ENCODE measurements at regions of chr5 and their contacts with region 1.

Region 1: GRCh38 chr5:76331126-76331525 is 72.0 kb upstream of the IQGAP2 start:
- DNase-seq: peak in 13 of 14 experiments; percentile 9 to 68 (median 37)
- ATAC-seq: peak; percentile 84
- H3K4me3 ChIP-seq: peak overlapping the region; percentile 2
- H3K4me3 Mint-ChIP-seq: peak overlapping the region; percentile 70
- H3K27ac ChIP-seq: peak overlapping the region in 1 of 2 donors; percentile 63
- H3K27ac Mint-ChIP-seq: peak overlapping the region; percentile 88
- H3K4me1 ChIP-seq: peaks cover 59% of the 10 kb centered on the region
- H3K4me1 Mint-ChIP-seq: peaks cover 75% of the 10 kb centered on the region
- H3K27me3 ChIP-seq: no peaks in the 10 kb centered on the region
- H3K27me3 Mint-ChIP-seq: no peaks in the 10 kb centered on the region
- CTCF ChIP-seq: no peak

Region 2: DNA sequence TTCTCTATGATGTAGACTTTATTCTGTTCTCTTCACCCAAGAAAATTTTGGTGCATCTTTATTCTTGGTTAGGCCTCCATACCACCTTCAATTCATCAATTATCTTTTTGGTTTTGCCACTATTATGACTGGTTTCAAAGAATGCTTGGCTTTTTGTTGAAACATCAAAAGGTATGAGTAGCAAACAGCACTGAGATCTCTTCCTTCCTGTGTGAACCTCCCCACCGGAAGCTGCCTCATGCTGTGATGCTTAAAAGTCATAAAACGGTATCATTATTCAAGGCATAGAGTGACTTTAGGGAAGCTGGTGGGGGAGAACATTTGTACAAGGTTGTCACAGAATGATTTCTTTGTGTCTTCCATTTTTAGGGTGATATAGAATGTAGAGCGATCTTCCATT is 142.5 kb after region 1 on chr5:
- CTCF ChIA-PET with region 1: no interaction called
- POLR2A ChIA-PET with region 1: interaction called, 6 read pairs
- intact Hi-C with region 1: loop called in 1 of 2 experiments (anchors 5 kb)
- DNase-seq: peak; percentile 40 to 90 (median 64)
- ATAC-seq: peak; percentile 95
- H3K4me3 ChIP-seq: no peak overlapping the region
- H3K4me3 Mint-ChIP-seq: peak overlapping the region; percentile 26
- H3K27ac ChIP-seq: peak overlapping the region; percentile 68
- H3K27ac Mint-ChIP-seq: peak overlapping the region; percentile 91
- H3K4me1 ChIP-seq: peaks cover 58% of the 10 kb centered on the region
- H3K4me1 Mint-ChIP-seq: peaks cover 84% of the 10 kb centered on the region
- H3K27me3 ChIP-seq: no peaks in the 10 kb centered on the region
- H3K27me3 Mint-ChIP-seq: no peaks in the 10 kb centered on the region
- CTCF ChIP-seq: no peak

Measured in CD4-positive, alpha-beta T cell (primary cell).